ENCODE measurements at regions of chr3 and their contacts with region 1.

Region 1: GRCh38 chr3:184250167-184250828 is 826 bp downstream of the EEF1AKMT4 start:
- DNase-seq: peak; percentile 98
- ATAC-seq: peak; percentile 67
- H3K4me3 Mint-ChIP-seq: peak overlapping the region; percentile 91
- H3K27ac Mint-ChIP-seq: peak overlapping the region; percentile 97
- H3K4me1 Mint-ChIP-seq: peaks cover 16% of the 10 kb centered on the region
- H3K27me3 Mint-ChIP-seq: no peaks in the 10 kb centered on the region
- CTCF ChIP-seq: peak; percentile 85

Region 2: GRCh38 chr3:183895296-183895695 is 355.0 kb before region 1 on chr3:
- CTCF ChIA-PET with region 1: interaction called, 13 read pairs
- POLR2A ChIA-PET with region 1: no interaction called
- intact Hi-C with region 1: no loop called
- DNase-seq: peak; percentile 37
- ATAC-seq: peak; percentile 94
- H3K4me3 Mint-ChIP-seq: no peak overlapping the region
- H3K27ac Mint-ChIP-seq: no peak overlapping the region
- H3K4me1 Mint-ChIP-seq: no peaks in the 10 kb centered on the region
- H3K27me3 Mint-ChIP-seq: peaks cover 6% of the 10 kb centered on the region
- CTCF ChIP-seq: peak; percentile 80

Region 3: DNA sequence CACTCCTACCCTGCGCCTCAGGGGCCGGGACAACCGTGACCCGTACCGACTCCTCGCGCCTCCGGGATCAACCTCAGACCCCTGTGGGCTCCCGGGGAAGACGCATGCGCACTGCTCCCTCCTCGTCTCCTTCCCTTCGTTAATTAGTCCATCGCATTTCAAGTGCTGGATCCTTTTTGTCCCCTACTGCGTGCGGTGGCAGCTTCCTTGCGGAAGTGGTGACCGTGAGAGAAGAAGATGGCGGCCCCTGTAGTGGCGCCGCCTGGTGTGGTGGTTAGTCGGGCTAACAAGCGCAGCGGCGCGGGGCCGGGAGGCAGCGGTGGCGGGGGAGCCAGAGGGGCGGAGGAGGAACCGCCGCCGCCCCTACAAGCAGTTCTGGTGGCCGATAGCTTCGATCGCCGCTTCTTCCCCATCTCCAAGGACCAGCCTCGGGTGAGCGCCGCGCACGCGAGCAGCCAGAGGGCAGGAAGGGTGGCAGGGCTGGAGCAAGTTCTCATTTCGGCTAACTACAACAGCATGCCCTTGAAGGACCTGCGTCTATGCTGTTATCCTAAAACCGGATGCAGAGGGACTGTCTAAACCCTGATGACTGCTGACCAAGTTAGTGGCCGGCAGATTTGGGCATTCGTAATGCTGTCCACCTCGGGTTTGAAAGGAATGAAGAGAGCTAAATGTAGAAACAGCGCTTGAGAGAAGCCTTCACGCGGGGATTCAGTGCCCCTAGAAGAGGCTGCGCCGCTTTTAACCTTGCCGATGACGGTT is 115.0 kb before region 1 on chr3 and contains the start of gene EIF2B5:
- CTCF ChIA-PET with region 1: interaction called, 4 read pairs
- POLR2A ChIA-PET with region 1: interaction called, 3 read pairs
- intact Hi-C with region 1: loop called (anchors 2 kb)
- DNase-seq: peak; percentile 92
- ATAC-seq: peak; percentile 87
- H3K4me3 Mint-ChIP-seq: peak within 1 kb of the TSS; percentile 88
- H3K27ac Mint-ChIP-seq: peak within 1 kb of the TSS; percentile 91
- H3K4me1 Mint-ChIP-seq: peaks cover 28% of the 10 kb centered on the region
- H3K27me3 Mint-ChIP-seq: no peaks in the 10 kb centered on the region
- CTCF ChIP-seq: no peak
- total RNA-seq, gene EIF2B5: 59.9 to 64.0 TPM

Region 4: DNA sequence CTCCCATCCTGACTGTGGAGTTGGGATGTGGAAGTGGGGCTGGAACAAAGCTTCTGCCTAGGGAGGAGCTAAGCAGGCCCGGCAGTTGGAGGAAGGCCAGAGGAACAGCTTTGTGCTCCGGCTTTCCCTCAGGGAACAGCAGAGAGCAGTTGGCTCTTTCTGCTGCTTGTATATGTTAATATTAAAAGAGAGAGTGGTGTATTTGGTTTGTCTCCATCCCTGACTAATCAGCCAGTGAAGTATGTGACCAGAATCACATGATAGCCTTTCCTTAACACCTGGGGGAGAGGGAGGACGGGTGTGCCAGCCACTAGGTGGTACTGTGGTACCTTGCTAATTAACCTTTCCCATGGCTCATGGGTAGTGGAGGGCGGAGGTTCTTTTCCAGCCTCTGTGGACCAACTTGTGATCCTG is 105.2 kb before region 1 on chr3:
- CTCF ChIA-PET with region 1: interaction called, 10 read pairs
- POLR2A ChIA-PET with region 1: no interaction called
- intact Hi-C with region 1: no loop called
- DNase-seq: peak; percentile 61
- ATAC-seq: peak; percentile 85
- H3K4me3 Mint-ChIP-seq: no peak overlapping the region
- H3K27ac Mint-ChIP-seq: peak overlapping the region; percentile 30
- H3K4me1 Mint-ChIP-seq: no peaks in the 10 kb centered on the region
- H3K27me3 Mint-ChIP-seq: no peaks in the 10 kb centered on the region
- CTCF ChIP-seq: peak; percentile 18

Region 5: DNA sequence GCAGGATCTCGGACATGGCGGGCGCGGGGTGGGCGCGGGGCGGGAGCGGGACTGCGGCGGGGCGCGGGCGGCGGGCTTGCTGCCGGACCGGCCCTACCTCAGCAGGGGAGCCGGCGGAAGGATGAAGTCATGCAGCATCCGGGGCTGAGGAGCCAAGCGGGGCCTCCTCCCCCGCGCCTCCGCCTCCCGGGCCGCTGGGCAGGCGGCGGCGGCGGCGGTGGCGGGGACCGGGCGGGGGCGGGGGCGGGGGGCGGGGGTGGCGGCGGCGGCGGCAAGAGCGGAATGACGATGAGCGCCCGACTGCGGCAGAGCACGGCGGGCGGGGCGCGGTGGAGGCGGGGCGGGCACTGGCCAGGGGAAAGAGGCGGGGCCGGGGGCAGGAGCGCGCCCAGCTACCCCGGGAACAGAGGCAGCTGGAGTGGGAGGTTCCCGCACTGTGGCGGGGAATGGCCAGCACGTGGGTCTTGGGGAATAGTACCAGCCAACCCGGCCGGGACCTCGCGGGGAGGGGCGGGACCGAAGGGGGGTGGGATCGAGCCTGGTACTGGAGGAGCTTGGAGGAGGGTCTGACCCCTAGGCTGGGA is 11.1 kb after region 1 on chr3 and contains the start of gene CAMK2N2:
- CTCF ChIA-PET with region 1: interaction called, 17 read pairs
- POLR2A ChIA-PET with region 1: interaction called, 4 read pairs
- intact Hi-C with region 1: no loop called
- DNase-seq: peak; percentile 66
- ATAC-seq: peak; percentile 66
- H3K4me3 Mint-ChIP-seq: peak within 1 kb of the TSS; percentile 78
- H3K27ac Mint-ChIP-seq: no peak within 1 kb of the TSS
- H3K4me1 Mint-ChIP-seq: peaks cover 17% of the 10 kb centered on the region
- H3K27me3 Mint-ChIP-seq: peaks cover 39% of the 10 kb centered on the region
- CTCF ChIP-seq: no peak
- total RNA-seq, gene CAMK2N2: 0.18 to 0.22 TPM

Region 6: DNA sequence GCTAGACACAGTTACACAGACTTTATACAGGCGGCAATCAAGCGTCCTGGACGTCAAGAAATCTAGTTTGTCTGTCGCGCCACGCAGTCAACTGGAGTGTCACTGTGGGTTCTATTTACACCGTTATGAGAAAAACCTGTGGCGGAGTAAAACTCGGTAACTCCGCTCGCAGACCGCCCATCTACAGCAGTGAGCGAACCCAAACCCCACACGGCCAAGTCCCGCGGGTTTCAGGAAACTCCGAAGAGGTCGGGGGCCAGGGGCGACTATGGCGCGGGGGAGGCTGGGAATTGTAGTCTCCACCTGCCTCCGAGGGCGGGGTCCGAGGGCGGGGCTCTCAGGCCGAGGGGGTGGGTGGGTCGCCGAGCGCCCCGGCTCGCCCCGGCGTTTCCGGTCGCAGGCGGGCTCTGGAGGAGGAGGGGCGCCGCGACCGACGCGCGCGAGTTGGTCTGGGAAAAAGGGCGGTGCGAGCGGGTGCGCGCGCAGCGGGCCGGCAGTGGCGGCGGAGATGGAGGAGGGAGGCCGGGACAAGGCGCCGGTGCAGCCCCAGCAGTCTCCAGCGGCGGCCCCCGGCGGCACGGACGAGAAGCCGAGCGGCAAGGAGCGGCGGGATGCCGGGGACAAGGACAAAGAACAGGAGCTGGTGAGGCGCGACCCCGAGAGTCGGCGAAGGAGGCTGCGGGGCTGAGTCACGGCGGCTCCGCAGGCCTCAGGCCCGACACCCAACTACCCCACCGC is 48.6 kb after region 1 on chr3 and contains the start of gene PSMD2:
- CTCF ChIA-PET with region 1: interaction called, 3 read pairs
- POLR2A ChIA-PET with region 1: no interaction called
- intact Hi-C with region 1: loop called (anchors 5 kb)
- DNase-seq: peak; percentile 99
- ATAC-seq: peak; percentile 96
- H3K4me3 Mint-ChIP-seq: peak within 1 kb of the TSS; percentile 79
- H3K27ac Mint-ChIP-seq: peak within 1 kb of the TSS; percentile 91
- H3K4me1 Mint-ChIP-seq: peaks cover 24% of the 10 kb centered on the region
- H3K27me3 Mint-ChIP-seq: no peaks in the 10 kb centered on the region
- CTCF ChIP-seq: no peak
- total RNA-seq, gene PSMD2: 220 to 221 TPM

Region 7: DNA sequence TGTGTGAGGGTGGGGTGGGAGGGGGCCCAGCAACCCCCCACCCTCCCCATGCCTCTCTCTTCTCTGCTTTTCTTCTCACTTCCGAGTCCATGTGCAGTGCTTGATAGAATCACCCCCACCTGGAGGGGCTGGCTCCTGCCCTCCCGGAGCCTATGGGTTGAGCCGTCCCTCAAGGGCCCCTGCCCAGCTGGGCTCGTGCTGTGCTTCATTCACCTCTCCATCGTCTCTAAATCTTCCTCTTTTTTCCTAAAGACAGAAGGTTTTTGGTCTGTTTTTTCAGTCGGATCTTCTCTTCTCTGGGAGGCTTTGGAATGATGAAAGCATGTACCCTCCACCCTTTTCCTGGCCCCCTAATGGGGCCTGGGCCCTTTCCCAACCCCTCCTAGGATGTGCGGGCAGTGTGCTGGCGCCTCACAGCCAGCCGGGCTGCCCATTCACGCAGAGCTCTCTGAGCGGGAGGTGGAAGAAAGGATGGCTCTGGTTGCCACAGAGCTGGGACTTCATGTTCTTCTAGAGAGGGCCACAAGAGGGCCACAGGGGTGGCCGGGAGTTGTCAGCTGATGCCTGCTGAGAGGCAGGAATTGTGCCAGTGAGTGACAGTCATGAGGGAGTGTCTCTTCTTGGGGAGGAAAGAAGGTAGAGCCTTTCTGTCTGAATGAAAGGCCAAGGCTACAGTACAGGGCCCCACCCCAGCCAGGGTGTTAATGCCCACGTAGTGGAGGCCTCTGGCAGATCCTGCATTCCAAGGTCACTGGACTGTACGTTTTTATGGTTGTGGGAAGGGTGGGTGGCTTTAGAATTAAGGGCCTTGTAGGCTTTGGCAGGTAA is 95.2 kb after region 1 on chr3:
- CTCF ChIA-PET with region 1: no interaction called
- POLR2A ChIA-PET with region 1: no interaction called
- intact Hi-C with region 1: no loop called
- DNase-seq: no peak
- ATAC-seq: peak; percentile 55
- H3K4me3 Mint-ChIP-seq: no peak overlapping the region
- H3K27ac Mint-ChIP-seq: no peak overlapping the region
- H3K4me1 Mint-ChIP-seq: peaks cover 3% of the 10 kb centered on the region
- H3K27me3 Mint-ChIP-seq: no peaks in the 10 kb centered on the region
- CTCF ChIP-seq: no peak

Measured in activated CD8-positive, alpha-beta T cell treated with anti-CD3 and anti-CD28 coated beads for 36 hours (primary cell).